MCF 10A (cell line): ENCODE measurements at regions of chr21 and their contacts with region 1.

Region 1: GRCh38 chr21:39105341-39105765 is 77.9 kb downstream of the PSMG1 start:
- DNase-seq: no peak
- H3K4me3 Mint-ChIP-seq: no peak overlapping the region
- H3K27ac Mint-ChIP-seq: no peak overlapping the region
- H3K4me1 Mint-ChIP-seq: peaks cover 6% of the 10 kb centered on the region
- H3K27me3 Mint-ChIP-seq: no peaks in the 10 kb centered on the region
- CTCF ChIP-seq: no peak

Region 2: DNA sequence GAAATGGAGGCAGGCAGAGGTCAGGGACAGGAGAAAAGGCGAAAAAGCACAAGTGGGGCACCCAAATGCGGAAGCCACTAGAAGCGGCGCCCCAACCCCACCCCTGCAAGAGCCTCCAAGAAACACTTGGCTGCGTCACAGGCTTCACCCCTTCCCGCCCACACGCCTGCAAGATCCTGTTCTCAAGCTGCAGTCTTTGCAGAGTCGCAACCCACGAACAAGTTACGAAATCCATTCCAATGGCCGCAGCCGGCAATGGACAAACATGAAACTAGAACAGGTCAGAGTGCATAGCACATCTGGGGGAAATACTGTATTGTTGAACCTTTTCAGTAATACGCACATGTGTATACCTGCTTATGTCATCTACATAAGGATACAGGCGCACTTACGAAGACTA is 25.7 kb before region 1 on chr21:
- CTCF ChIA-PET with region 1: no interaction called
- POLR2A ChIA-PET with region 1: interaction called, 13 read pairs
- intact Hi-C with region 1: no loop called
- DNase-seq: peak; percentile 76
- H3K4me3 Mint-ChIP-seq: no peak overlapping the region
- H3K27ac Mint-ChIP-seq: no peak overlapping the region
- H3K4me1 Mint-ChIP-seq: peaks cover 14% of the 10 kb centered on the region
- H3K27me3 Mint-ChIP-seq: no peaks in the 10 kb centered on the region
- CTCF ChIP-seq: no peak